HepG2 (cell line): ENCODE measurements at regions of chr16 and their contacts with region 1.

Region 1: GRCh38 chr16:70679666-70680494 is 6.0 kb downstream of the MTSS2 start:
- DNase-seq: no peak
- ATAC-seq: no peak
- H3K4me3 ChIP-seq: no peak overlapping the region; a peak in 1 of 6 replicates
- H3K27ac ChIP-seq: peak overlapping the region; percentile 91
- H3K4me1 ChIP-seq: peaks cover 39% of the 10 kb centered on the region
- H3K27me3 ChIP-seq: no peaks in the 10 kb centered on the region; a peak in 1 of 5 replicates
- CTCF ChIP-seq: peak; percentile 26; the same call in 1 of the 2 replicates
- EP300 ChIP-seq: no peak
- POLR2A ChIP-seq: no peak
- RAD21 ChIP-seq: peak; percentile 58; the same call in 1 of the 2 replicates

Region 2: GRCh38 chr16:70661918-70662641 is 17.8 kb before region 1 on chr16:
- CTCF ChIA-PET with region 1: no interaction called
- POLR2A ChIA-PET with region 1: interaction called, 27 read pairs
- in situ Hi-C with region 1: no loop called
- intact Hi-C with region 1: no loop called
- DNase-seq: no peak
- ATAC-seq: peak; percentile 1; the same call in 1 of the 3 replicates
- H3K4me3 ChIP-seq: no peak overlapping the region
- H3K27ac ChIP-seq: peak overlapping the region; percentile 19
- H3K4me1 ChIP-seq: peaks cover 20% of the 10 kb centered on the region
- H3K27me3 ChIP-seq: 0 out of 5 replicates have a peak, but pooled peaks cover 0 to under 1% of the 10 kb centered on the region in 2 experiments
- CTCF ChIP-seq: no peak
- EP300 ChIP-seq: no peak
- POLR2A ChIP-seq: peak; percentile 27 to 59; a peak in 2 of 4 replicates
- RAD21 ChIP-seq: no peak

Region 3: GRCh38 chr16:70737377-70738082 is 57.6 kb after region 1 on chr16:
- CTCF ChIA-PET with region 1: interaction called, 19 read pairs
- POLR2A ChIA-PET with region 1: interaction called, 115 read pairs
- in situ Hi-C with region 1: no loop called
- intact Hi-C with region 1: loop called (anchors 1 kb)
- DNase-seq: no peak
- ATAC-seq: no peak
- H3K4me3 ChIP-seq: no peak overlapping the region
- H3K27ac ChIP-seq: peak overlapping the region; percentile 11
- H3K4me1 ChIP-seq: peaks cover 59% of the 10 kb centered on the region
- H3K27me3 ChIP-seq: no peaks in the 10 kb centered on the region
- CTCF ChIP-seq: no peak
- EP300 ChIP-seq: no peak
- POLR2A ChIP-seq: no peak
- RAD21 ChIP-seq: no peak

Region 4: GRCh38 chr16:70759666-70760065 is 79.8 kb after region 1 on chr16:
- CTCF ChIA-PET with region 1: no interaction called
- POLR2A ChIA-PET with region 1: interaction called, 12 read pairs
- in situ Hi-C with region 1: no loop called
- intact Hi-C with region 1: no loop called
- DNase-seq: no peak
- ATAC-seq: no peak
- H3K4me3 ChIP-seq: no peak overlapping the region
- H3K27ac ChIP-seq: peak overlapping the region; percentile 50
- H3K4me1 ChIP-seq: peaks cover 28% of the 10 kb centered on the region
- H3K27me3 ChIP-seq: no peaks in the 10 kb centered on the region
- CTCF ChIP-seq: 0 out of 2 replicates have a peak, but pooled peaks have one; percentile 15
- EP300 ChIP-seq: no peak
- POLR2A ChIP-seq: no peak
- RAD21 ChIP-seq: no peak

Region 5: DNA sequence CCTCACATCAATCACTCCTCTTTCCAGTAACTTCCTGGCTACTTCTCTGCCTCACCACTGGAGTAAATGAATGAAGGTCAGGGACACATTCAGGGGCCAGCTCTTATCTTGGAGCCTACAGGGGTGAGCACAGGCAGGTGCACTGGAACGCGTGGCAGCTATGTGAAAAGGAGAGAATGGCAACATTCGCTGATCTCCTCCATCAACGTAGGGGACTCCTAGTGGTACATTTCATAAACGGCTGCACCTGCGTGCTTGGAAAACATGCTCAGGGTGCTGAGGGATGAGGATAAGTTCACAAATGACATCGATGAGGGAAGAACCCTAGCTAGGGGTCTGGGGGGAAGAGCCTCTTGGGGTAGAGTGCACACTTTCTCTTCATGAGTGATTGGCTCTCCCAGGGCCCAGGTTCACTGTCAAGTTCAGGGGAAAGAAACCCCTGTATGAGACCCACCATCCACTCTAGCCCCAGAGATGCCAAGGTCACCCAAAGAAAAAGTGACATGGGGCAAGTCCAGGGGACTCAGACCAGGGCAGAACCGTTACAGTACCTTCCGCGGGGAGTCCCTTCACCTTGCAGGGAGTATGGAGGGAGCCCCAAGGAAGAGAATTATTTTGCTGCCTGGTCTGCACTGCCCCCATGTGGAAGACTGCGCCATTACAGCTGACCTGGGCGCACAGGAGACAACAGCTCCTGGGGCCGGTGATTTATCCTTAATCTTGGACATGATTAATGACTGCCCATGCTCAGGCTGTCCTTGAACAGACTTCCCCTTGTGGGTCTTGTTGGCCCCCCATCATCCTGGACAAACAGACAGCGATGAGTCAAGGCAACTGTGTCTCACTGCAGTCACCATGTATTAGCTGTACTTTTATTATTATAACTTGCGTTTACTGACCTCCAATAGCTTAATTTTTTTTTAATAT is 91.0 kb after region 1 on chr16:
- CTCF ChIA-PET with region 1: interaction called, 21 read pairs
- POLR2A ChIA-PET with region 1: interaction called, 29 read pairs
- in situ Hi-C with region 1: no loop called
- intact Hi-C with region 1: loop called (anchors 1 kb)
- DNase-seq: peak; percentile 55
- ATAC-seq: peak; percentile 87
- H3K4me3 ChIP-seq: no peak overlapping the region
- H3K27ac ChIP-seq: no peak overlapping the region
- H3K4me1 ChIP-seq: peaks cover 12% of the 10 kb centered on the region
- H3K27me3 ChIP-seq: no peaks in the 10 kb centered on the region
- CTCF ChIP-seq: peak; percentile 93
- EP300 ChIP-seq: no peak
- POLR2A ChIP-seq: no peak
- RAD21 ChIP-seq: peak; percentile 95